ENCODE measurements at regions of chr3 and their contacts with region 1.

Region 1: GRCh38 chr3:10224784-10225665 is 23.2 kb upstream of the TATDN2 start:
- DNase-seq: peak; percentile 60
- ATAC-seq: peak; percentile 78
- H3K4me3 ChIP-seq: no peak overlapping the region
- H3K27ac ChIP-seq: no peak overlapping the region
- H3K4me1 ChIP-seq: peaks cover 3% of the 10 kb centered on the region
- H3K27me3 ChIP-seq: no peaks in the 10 kb centered on the region
- CTCF ChIP-seq: peak; percentile 77; the same call in 1 of the 2 replicates

Region 2: GRCh38 chr3:10173926-10174435 is 51.0 kb before region 1 on chr3:
- CTCF ChIA-PET with region 1: no interaction called
- POLR2A ChIA-PET with region 1: no interaction called
- in situ Hi-C with region 1: no loop called
- intact Hi-C with region 1: loop called (anchors 10 kb)
- DNase-seq: no peak
- ATAC-seq: peak; percentile 72
- H3K4me3 ChIP-seq: no peak overlapping the region
- H3K27ac ChIP-seq: peak overlapping the region; percentile 51
- H3K4me1 ChIP-seq: peaks cover 27% of the 10 kb centered on the region
- H3K27me3 ChIP-seq: no peaks in the 10 kb centered on the region
- CTCF ChIP-seq: no peak

Region 3: DNA sequence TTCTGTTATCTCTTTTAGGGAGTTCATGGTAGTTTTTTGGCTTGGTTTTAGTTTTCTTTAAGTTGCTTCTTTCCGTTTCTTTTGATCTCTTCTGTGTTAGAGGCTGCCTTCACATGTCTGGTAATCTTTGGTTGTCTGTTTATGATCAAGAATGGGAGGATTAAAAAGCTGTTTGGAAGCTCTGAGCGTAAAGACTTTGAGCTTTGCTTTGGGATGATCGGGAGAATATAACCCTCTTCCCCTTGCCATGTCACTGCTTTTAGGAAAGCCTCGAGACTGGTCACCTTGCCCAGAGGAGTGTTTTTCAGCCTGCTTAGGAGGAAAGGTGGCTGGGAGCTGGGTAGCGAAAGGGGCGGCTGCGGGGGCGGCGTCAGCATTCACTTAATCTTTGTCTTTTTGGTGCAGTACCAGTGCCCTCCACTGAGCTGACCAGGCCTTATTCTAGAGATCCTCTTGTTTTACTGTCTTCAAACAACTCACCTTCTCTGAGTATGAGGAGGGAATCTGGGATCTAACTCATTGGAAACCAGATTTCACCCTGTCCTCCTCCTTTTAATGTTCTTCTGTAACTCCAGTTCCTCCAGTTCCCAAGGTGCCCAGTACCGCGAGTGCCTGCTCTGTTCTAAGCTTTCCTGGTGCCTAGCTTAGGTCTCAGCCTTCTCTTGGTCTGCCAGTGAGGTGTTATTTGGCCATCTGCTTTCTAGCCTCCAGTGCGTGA is 38.8 kb after region 1 on chr3:
- CTCF ChIA-PET with region 1: no interaction called
- POLR2A ChIA-PET with region 1: no interaction called
- in situ Hi-C with region 1: no loop called
- intact Hi-C with region 1: no loop called
- DNase-seq: no peak
- ATAC-seq: peak; percentile 83; the same call in 1 of the 2 replicates
- H3K4me3 ChIP-seq: no peak overlapping the region
- H3K27ac ChIP-seq: no peak overlapping the region
- H3K4me1 ChIP-seq: no peaks in the 10 kb centered on the region
- H3K27me3 ChIP-seq: no peaks in the 10 kb centered on the region
- CTCF ChIP-seq: peak; percentile 51

Measured in Panc1 (cell line).